A673 (cell line): ENCODE measurements at regions of chr7 and their contacts with region 1.

Region 1: DNA sequence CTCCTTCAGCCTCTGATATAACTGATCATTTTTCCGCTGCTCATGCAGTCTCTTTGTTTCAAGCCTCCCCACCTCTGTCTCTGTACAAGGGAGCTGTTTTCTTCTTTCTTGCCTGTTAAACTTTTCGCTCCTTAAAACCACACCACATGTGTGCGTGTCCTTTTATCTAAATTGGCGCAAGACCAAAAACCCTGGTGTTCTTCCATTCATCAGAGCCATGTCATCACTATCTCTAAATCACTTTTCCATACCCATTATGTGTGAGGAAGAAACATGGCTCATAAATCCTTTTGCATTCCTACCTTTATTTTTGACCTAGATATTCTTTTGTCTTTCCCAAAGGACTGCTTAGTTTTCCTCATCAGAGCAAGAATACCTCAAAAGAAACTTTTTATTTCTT is 239.0 kb upstream of the IMMP2L start:
- DNase-seq: peak; percentile 3
- H3K4me3 ChIP-seq: no peak overlapping the region
- H3K27ac ChIP-seq: no peak overlapping the region
- H3K4me1 ChIP-seq: no peaks in the 10 kb centered on the region
- H3K27me3 ChIP-seq: no peaks in the 10 kb centered on the region
- CTCF ChIP-seq: no peak

Region 2: DNA sequence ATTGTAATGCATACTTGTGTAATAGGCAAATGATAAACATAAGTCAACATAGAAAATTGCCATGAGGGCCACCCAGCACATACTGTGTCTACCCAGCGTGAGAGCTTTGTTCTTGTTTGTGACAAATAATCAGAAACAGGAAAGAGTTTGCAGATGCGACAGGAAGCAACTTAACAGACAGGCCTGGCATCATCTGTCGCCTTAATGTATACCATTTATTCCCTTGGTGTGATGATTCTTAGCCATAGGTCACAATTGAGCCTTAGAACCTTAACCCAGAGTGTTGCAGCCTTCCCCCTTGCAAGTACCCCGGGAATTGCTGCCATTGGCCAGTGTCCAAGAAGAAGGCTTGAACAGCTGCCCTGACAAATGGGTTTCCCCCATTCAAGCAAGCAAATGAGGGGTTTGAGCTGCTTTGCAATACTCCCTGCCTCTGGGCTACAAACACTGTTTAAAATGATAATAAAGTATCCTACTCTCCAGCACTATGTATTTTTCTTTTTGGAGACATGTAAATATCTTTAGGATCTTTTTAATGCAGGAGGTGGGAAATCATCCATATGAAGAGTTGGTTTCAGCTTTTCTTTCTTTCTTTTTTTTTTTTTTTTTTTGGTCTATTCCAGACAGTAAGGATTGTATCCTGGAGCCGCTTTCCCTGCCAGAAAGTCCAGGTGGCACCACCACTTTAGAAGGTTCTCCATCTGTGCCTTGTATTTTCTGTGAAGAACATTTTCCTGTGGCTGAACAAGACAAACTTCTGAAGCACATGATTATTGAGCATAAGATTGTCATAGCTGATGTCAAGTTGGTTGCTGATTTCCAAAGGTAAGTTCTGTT is 485.2 kb after region 1 on chr7:
- CTCF ChIA-PET with region 1: no interaction called
- POLR2A ChIA-PET with region 1: interaction called, 10 read pairs
- intact Hi-C with region 1: no loop called
- DNase-seq: peak; percentile 93
- H3K4me3 ChIP-seq: no peak overlapping the region
- H3K27ac ChIP-seq: peak overlapping the region; percentile 12
- H3K4me1 ChIP-seq: peaks cover 21% of the 10 kb centered on the region
- H3K27me3 ChIP-seq: no peaks in the 10 kb centered on the region
- CTCF ChIP-seq: no peak